ENCODE measurements at regions of chr10 and their contacts with region 1.

Region 1: DNA sequence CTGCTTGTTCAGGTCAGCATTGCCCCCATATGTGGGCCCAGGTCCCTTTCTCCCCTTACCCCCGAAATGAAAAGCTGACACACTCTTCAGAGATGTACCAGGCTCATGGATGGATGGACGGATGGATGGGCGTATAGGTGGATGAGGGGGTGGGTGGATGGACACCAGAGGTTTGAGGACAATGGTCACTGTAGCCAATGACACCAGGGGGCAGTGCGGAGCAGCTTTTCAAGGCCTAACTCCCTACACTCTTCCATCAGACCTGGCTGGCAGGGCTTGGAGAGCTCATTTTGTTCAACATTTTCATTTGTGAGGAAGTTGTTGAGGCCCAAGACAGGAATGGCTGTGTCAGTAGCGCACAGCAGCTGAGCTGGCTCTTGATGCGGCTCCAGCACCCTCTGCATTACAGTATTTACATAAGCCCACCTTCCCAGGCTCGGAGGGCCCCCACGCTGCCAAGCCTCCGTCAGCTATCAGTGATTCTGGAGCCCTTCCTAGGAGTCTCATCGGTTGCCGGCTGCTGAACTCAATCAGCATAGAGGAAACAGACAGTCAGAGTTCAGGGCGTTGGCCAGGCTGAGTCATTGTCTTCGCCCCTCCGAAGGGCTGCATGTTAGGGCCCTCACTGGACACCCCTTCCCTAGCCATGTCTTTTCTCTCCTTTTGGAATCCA is 11.6 kb upstream of the FFAR4 start:
- DNase-seq: peak; percentile 74
- H3K4me3 ChIP-seq: no peak overlapping the region
- H3K27ac ChIP-seq: no peak overlapping the region
- H3K4me1 ChIP-seq: peaks cover 6% of the 10 kb centered on the region
- H3K27me3 ChIP-seq: no peaks in the 10 kb centered on the region
- CTCF ChIP-seq: peak; percentile 84 to 90
- POLR2A ChIP-seq: no peak

Region 2: DNA sequence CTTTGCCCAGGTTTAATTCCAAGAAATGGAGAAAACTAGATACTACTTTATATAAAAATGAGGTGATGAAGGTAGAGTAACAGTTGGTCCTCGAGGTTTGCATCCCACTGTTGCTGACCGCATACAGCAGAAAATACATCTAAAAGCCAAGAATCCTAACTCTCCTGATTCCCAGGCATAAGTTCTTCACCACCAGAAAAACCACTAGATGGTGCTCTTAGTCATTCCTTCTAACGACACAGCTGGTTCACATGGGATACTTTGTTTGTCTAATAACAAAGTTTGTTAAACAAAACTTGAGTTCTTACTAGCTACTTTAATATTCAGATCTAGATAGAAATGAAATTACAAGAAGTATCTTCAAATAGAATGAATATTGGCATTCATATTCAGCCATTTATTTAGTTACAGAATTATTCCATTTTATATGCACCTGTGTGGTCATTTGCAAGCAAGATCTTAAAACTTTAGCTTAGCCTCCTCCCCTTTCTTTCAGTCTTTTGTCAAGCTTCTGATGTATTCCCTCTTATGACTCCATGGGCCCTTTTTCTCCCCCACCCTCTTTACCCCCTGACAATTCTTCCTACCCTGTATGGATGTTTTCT is 548.4 kb before region 1 on chr10:
- CTCF ChIA-PET with region 1: no interaction called
- POLR2A ChIA-PET with region 1: no interaction called
- dilution Hi-C with region 1: no loop called
- intact Hi-C with region 1: no loop called
- DNase-seq: peak; percentile 61
- H3K4me3 ChIP-seq: no peak overlapping the region
- H3K27ac ChIP-seq: no peak overlapping the region
- H3K4me1 ChIP-seq: no peaks in the 10 kb centered on the region
- H3K27me3 ChIP-seq: no peaks in the 10 kb centered on the region
- CTCF ChIP-seq: peak; percentile 45 to 48
- POLR2A ChIP-seq: no peak

Region 3: GRCh38 chr10:93220296-93221170 is 334.4 kb before region 1 on chr10:
- CTCF ChIA-PET with region 1: no interaction called
- POLR2A ChIA-PET with region 1: no interaction called
- dilution Hi-C with region 1: no loop called
- intact Hi-C with region 1: no loop called
- DNase-seq: no peak
- H3K4me3 ChIP-seq: no peak overlapping the region
- H3K27ac ChIP-seq: no peak overlapping the region
- H3K4me1 ChIP-seq: no peaks in the 10 kb centered on the region
- H3K27me3 ChIP-seq: peaks cover 3 to 14% of the 10 kb centered on the region in 2 experiments
- CTCF ChIP-seq: no peak
- POLR2A ChIP-seq: no peak

Region 4: GRCh38 chr10:93541402-93542357 is 13.2 kb before region 1 on chr10:
- CTCF ChIA-PET with region 1: interaction called, 36 read pairs
- POLR2A ChIA-PET with region 1: no interaction called
- dilution Hi-C with region 1: no loop called
- intact Hi-C with region 1: no loop called
- DNase-seq: peak; percentile 69
- H3K4me3 ChIP-seq: peak overlapping the region in 1 of 3 experiments; percentile 7
- H3K27ac ChIP-seq: no peak overlapping the region
- H3K4me1 ChIP-seq: peaks cover 5% of the 10 kb centered on the region
- H3K27me3 ChIP-seq: peaks cover 0 to 2% of the 10 kb centered on the region in 2 experiments
- CTCF ChIP-seq: peak; percentile 89 to 97
- POLR2A ChIP-seq: no peak

Region 5: DNA sequence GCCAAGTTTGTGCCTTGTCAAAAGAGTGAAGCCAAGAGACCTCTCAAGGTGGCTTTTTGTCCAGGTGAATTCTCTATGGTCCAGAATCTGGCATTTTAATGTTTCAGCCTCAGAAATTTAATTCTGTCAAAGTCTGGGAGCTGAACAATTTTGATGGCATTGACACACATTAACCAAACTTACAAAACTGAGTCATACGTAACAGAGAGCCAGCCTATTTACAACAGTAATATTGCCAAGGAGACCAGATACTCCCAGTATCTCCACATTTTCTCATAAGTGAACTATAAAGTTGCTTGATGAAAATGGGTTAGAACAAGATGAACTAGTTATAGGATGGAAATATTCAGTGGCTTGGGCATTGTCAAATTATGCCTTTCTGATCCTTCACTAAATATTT is 101.3 kb after region 1 on chr10:
- CTCF ChIA-PET with region 1: interaction called, 16 read pairs
- POLR2A ChIA-PET with region 1: no interaction called
- dilution Hi-C with region 1: no loop called
- intact Hi-C with region 1: no loop called
- DNase-seq: no peak
- H3K4me3 ChIP-seq: no peak overlapping the region
- H3K27ac ChIP-seq: no peak overlapping the region
- H3K4me1 ChIP-seq: peaks cover 4% of the 10 kb centered on the region
- H3K27me3 ChIP-seq: no peaks in the 10 kb centered on the region
- CTCF ChIP-seq: no peak
- POLR2A ChIP-seq: no peak

Region 6: GRCh38 chr10:93816123-93816747 is 261.3 kb after region 1 on chr10:
- CTCF ChIA-PET with region 1: interaction called, 70 read pairs
- POLR2A ChIA-PET with region 1: no interaction called
- dilution Hi-C with region 1: no loop called
- intact Hi-C with region 1: loop called (anchors 1 kb)
- DNase-seq: peak; percentile 44
- H3K4me3 ChIP-seq: no peak overlapping the region
- H3K27ac ChIP-seq: no peak overlapping the region
- H3K4me1 ChIP-seq: no peaks in the 10 kb centered on the region
- H3K27me3 ChIP-seq: peaks cover 22 to 24% of the 10 kb centered on the region in 2 experiments
- CTCF ChIP-seq: peak; percentile 51 to 70
- POLR2A ChIP-seq: no peak

Region 7: DNA sequence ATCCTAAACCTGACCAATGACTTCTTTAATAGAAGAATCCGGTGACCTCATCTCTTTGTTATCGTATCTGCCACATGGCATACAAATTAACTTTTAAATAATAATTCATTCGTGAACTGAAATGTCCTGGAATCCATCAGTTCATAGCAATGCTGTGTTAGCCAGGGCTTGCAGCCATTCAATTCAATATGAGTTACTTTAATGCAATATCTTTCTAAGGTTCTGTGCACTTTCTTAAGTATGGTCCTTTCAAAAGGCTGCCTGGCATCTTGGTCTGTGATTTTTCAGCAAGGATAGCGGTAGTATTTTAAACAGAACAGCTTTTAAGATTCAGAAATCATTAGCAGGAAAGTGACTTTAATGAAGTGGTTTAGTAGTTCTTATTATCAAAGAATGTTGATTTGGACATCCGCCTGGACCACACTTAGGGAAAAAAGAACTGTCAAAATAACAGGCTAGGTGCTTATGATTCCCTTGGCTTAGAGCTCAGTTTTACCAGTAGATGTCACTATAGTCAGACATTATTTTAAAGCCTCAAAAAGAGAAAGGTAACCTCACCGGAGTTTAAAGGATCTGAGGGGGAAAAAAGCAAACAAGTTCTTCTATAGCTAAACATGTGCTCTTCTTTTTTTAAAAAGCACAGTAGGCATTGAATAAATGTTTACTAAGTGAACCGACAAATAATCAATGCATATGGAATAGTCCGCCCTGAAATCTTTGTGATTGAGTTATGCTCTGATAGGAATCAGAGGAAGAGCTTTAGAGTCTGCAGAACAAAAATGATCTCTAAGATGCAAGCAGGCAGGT is 361.6 kb after region 1 on chr10:
- CTCF ChIA-PET with region 1: interaction called, 8 read pairs
- POLR2A ChIA-PET with region 1: no interaction called
- dilution Hi-C with region 1: no loop called
- intact Hi-C with region 1: loop called (anchors 2 kb)
- DNase-seq: peak; percentile 31
- H3K4me3 ChIP-seq: no peak overlapping the region
- H3K27ac ChIP-seq: no peak overlapping the region
- H3K4me1 ChIP-seq: peaks cover 7% of the 10 kb centered on the region
- H3K27me3 ChIP-seq: no peaks in the 10 kb centered on the region
- CTCF ChIP-seq: peak in 1 of 2 donors; percentile 33
- POLR2A ChIP-seq: no peak